ENCODE measurements at regions of chr12 and their contacts with region 1.

Region 1: DNA sequence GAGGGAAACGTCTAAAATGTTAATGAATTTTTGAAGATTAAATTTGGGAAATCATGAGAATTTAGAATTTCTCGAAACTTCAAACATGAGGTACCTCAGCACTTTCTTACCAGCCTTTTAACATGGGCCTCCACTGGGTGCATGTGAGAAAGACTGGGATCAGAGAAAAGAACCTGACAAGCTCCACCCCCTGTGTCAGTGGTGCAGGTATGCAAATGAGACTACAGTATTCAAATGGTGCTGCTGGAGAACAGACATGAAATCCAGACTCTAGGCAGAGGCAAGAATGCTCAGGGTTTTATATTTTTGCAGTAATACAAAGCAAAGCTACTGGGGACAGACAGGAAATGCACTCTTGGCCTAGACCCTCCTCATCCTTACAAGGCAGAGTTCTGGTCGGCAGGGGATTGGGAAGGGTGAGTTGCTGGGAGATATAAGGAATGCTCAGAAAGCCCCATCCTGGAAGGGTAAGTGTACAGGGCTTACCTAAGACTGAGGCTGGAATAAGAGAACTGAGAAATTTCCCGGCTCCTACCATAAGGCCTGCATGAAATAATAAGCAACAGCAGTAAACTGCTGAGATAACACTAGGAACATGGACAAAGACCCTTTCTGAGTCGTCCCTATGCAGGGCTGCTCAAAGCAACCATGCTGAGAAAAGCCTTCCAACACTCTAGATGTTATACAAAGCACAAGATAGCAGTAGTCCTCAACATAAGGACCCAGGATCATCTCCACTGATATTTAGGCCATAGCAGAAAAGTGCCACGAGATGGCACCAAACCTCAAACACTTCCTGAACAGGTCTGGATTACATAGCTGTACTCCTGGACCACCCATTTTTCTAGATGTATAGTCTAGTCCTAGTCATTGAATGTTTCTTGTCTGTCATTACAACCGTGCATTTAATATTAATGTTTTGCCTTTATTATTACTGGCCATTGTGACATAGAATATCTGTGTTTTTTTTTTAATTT is 260.8 kb downstream of the RASSF9 start:
- DNase-seq: peak in 1 of 2 experiments; percentile 56
- H3K4me3 ChIP-seq: no peak overlapping the region
- H3K27ac ChIP-seq: no peak overlapping the region
- H3K4me1 ChIP-seq: peaks cover 0 to 6% (median 0%) of the 10 kb centered on the region in 4 experiments; a peak in 1 of 7 replicates
- H3K27me3 ChIP-seq: no peaks in the 10 kb centered on the region
- CTCF ChIP-seq: peak in 2 of 3 experiments; percentile 64 to 74; a peak in 3 of 4 replicates
- EP300 ChIP-seq: no peak
- POLR2A ChIP-seq: no peak
- RAD21 ChIP-seq: peak; percentile 84 to 85

Region 2: DNA sequence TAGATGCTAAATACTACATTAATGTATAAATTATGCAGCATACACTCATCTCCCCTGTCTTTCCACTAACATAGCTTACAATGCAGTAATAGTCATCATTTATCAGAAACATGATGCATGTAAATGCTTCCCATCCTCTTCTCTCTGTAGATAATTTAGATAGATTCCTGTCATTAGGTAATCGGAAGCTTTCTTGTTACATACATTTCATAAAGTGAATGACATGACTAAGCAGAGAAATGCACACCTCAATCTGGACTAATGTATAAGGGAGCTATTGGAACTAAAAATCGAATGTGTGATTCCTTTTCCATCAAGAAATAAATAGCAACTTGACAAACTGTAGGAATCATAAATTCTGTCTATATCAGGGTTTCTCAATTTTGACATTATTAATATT is 12.6 kb before region 1 on chr12:
- CTCF ChIA-PET with region 1: interaction called, 11 read pairs
- POLR2A ChIA-PET with region 1: interaction called, 3 read pairs
- DNase-seq: no peak
- H3K4me3 ChIP-seq: no peak overlapping the region
- H3K27ac ChIP-seq: no peak overlapping the region
- H3K4me1 ChIP-seq: no peaks in the 10 kb centered on the region
- H3K27me3 ChIP-seq: no peaks in the 10 kb centered on the region
- CTCF ChIP-seq: no peak
- EP300 ChIP-seq: no peak
- POLR2A ChIP-seq: no peak
- RAD21 ChIP-seq: no peak

Region 3: GRCh38 chr12:85588221-85588620 is 12.8 kb after region 1 on chr12:
- CTCF ChIA-PET with region 1: interaction called, 14 read pairs
- POLR2A ChIA-PET with region 1: no interaction called
- DNase-seq: no peak
- H3K4me3 ChIP-seq: no peak overlapping the region
- H3K27ac ChIP-seq: no peak overlapping the region
- H3K4me1 ChIP-seq: no peaks in the 10 kb centered on the region; a peak in 2 of 7 replicates
- H3K27me3 ChIP-seq: no peaks in the 10 kb centered on the region
- CTCF ChIP-seq: no peak
- EP300 ChIP-seq: no peak
- POLR2A ChIP-seq: no peak
- RAD21 ChIP-seq: no peak